SK-N-SH (cell line): ENCODE measurements at regions of chr4 and their contacts with region 1.

Region 1: DNA sequence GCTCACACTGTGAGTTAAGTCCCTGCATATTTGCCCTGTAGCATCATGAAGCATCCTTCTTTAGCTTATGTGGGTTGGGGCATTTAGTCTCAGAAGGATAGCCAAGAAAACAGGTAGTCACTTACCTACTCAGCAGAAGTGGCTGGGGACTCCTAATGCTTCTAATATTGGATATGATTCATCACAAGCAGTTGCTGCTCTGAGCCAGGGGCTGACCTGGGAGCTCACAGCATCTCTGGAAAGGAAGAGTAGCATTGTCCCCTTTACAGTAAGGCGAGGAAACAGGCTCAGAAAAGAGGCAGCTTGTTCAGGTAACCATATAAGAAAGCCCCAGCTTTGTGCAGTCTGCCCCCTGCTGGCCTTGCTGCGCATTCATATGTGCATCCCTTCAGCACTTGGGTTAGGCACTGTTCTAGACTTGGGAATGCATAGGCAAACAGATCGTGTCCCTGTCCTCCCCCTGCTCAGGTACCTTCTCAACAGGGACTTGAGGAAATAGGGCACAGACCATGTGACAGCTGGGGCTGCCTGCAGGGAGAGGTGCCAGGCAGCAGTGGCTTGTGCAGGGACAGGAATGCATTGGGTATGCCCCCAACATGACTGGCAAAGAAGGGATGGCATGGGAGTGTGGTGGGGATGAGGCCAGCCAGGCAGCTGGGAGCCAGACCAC is 35.7 kb upstream of the TBC1D14 start:
- DNase-seq: peak; percentile 63
- H3K4me3 ChIP-seq: no peak overlapping the region; a peak in 1 of 4 replicates
- H3K27ac ChIP-seq: no peak overlapping the region
- H3K4me1 ChIP-seq: no peaks in the 10 kb centered on the region
- H3K27me3 ChIP-seq: no peaks in the 10 kb centered on the region
- CTCF ChIP-seq: peak; percentile 91
- EP300 ChIP-seq: no peak
- RAD21 ChIP-seq: peak; percentile 83

Region 2: DNA sequence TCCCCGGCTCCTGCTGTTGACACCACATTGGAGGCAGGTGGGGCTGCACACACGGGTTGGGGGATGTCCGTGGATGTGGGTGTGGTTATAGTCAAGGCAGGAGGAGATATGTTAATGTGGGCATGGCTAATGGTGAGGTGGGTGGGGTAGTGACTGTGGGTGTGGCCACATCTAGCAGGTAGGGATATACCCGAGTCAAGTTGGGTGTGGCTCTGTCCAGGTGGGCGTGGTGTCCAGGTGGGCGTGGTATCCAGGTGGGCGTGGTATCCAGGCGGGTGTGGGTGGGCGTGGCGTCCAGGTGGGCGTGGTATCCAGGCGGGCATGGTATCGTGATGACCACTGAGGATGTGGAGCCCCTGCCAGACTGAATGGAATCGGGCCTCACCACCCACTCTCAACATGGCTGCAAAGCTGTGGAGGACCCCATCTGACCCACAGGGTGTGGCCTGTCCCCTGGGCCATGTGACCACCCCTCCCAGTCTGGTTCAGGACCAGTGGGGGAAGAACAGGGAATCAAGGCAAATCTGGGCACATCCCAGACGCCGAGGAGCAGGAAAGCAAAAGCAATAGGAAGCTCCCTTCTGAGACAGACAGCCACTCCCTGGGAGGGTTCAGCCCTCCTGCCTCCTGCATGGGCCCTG is 277.9 kb before region 1 on chr4:
- CTCF ChIA-PET with region 1: no interaction called
- POLR2A ChIA-PET with region 1: no interaction called
- DNase-seq: no peak
- H3K4me3 ChIP-seq: no peak overlapping the region
- H3K27ac ChIP-seq: no peak overlapping the region
- H3K4me1 ChIP-seq: no peaks in the 10 kb centered on the region
- H3K27me3 ChIP-seq: no peaks in the 10 kb centered on the region
- CTCF ChIP-seq: no peak
- EP300 ChIP-seq: no peak
- RAD21 ChIP-seq: no peak

Region 3: DNA sequence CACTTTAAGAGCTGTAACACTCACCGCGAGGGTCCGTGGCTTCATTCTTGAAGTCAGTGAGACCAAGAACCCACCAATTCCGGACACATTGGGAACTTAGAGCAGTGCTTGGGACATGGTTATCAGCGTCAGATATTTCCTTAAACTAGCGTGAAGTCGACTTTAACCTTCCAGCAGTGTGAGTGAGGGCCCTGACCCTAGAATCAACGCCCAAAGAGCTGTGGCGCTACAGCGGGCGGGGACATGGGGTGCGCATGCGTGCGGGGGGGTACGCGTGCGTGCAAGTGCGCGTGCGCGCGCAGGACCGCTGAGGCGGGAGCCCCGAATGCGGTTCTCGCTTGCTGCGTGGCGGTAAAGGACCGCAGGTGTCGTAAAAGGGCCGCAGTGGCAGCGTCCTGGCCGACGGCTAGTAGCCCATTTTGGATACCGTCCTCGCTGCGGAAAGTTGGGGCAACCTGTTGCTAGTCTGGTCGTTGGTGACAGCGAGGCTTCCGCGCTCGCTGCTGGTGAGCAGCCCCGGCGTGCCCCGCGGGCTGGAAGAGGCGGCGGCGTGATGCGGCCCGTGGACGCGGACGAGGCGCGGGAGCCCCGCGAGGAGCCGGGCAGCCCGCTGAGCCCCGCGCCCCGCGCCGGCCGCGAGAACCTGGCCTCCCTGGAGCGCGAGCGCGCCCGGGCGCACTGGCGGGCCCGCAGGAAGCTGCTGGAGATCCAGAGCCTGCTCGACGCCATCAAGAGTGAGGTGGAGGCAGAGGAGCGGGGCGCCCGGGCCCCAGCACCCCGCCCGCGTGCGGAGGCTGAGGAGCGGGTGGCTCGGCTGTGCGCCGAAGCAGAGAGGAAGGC is 200.0 kb before region 1 on chr4:
- CTCF ChIA-PET with region 1: interaction called, 13 read pairs
- POLR2A ChIA-PET with region 1: no interaction called
- DNase-seq: peak; percentile 100
- H3K4me3 ChIP-seq: peak overlapping the region; percentile 73 to 87
- H3K27ac ChIP-seq: peak overlapping the region; percentile 89 to 91
- H3K4me1 ChIP-seq: peaks cover 16 to 20% of the 10 kb centered on the region in 2 experiments; a peak in 2 of 4 replicates
- H3K27me3 ChIP-seq: no peaks in the 10 kb centered on the region
- CTCF ChIP-seq: no peak
- EP300 ChIP-seq: no peak
- RAD21 ChIP-seq: no peak

Region 4: GRCh38 chr4:6716018-6716911 is 157.7 kb before region 1 on chr4 and contains the start of gene BLOC1S4:
- CTCF ChIA-PET with region 1: interaction called, 204 read pairs
- POLR2A ChIA-PET with region 1: no interaction called
- DNase-seq: peak; percentile 97
- H3K4me3 ChIP-seq: peak within 1 kb of the TSS; percentile 81 to 83
- H3K27ac ChIP-seq: peak within 1 kb of the TSS; percentile 60 to 85
- H3K4me1 ChIP-seq: peaks cover 0 to 6% of the 10 kb centered on the region in 2 experiments; a peak in 2 of 4 replicates
- H3K27me3 ChIP-seq: no peaks in the 10 kb centered on the region
- CTCF ChIP-seq: no peak
- EP300 ChIP-seq: no peak
- RAD21 ChIP-seq: no peak
- polyA plus RNA-seq, gene BLOC1S4: 21.9 and 22.1 TPM in 2 replicates

Region 5: DNA sequence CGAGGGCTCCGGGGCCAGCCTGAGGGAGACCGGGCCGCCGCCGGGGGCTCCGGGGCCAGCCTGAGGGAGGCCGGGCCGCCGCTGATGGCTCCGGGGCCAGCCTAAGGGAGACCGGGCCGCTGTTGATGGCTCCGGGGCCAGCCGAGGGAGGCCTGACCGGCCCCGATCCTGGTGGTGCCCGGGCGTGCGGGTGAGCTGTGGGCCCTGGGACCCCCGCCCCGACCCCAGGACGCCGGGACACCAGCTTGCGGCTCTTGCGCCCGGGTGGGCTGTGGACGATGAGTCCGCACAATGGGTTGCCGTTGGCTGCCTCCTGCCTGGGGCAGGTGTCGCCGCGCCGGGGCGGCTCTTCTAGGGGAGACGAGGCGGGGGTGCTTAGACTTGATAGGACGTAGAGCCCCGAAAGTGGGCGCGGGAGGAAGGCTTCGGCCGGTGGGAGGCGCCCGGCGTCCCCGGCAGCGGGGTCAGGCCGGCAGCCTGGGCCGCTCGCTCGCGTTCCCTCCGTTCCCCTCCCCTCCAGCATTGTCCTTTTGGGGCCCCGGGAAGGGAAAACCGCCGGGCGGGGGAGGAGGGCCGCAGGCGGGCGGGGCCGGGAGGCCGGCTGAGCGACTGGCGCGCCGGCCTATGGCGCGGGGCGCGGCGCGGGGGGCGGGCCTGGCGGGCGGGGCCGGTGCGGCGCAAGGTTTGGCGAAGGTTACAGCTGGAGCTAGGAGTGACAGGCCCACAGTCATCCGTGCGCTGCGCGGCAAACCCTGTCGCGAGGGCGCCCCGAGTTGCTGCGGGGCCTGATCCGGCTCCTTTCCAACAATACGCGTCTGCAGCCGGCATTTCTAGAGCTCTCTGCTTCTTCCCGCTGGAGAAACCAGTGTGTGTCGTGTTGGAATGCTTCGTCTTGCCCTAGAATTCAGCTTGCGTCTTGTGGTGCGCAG is 90.6 kb before region 1 on chr4:
- CTCF ChIA-PET with region 1: interaction called, 24 read pairs
- POLR2A ChIA-PET with region 1: no interaction called
- DNase-seq: peak; percentile 98
- H3K4me3 ChIP-seq: peak overlapping the region; percentile 81 to 98
- H3K27ac ChIP-seq: peak overlapping the region; percentile 87 to 90
- H3K4me1 ChIP-seq: peaks cover 0 to 9% of the 10 kb centered on the region in 2 experiments; a peak in 2 of 4 replicates
- H3K27me3 ChIP-seq: no peaks in the 10 kb centered on the region
- CTCF ChIP-seq: peak; percentile 25
- EP300 ChIP-seq: no peak
- RAD21 ChIP-seq: no peak

Region 6: GRCh38 chr4:6804082-6804752 is 69.7 kb before region 1 on chr4:
- CTCF ChIA-PET with region 1: interaction called, 11 read pairs
- POLR2A ChIA-PET with region 1: no interaction called
- DNase-seq: no peak
- H3K4me3 ChIP-seq: no peak overlapping the region
- H3K27ac ChIP-seq: no peak overlapping the region
- H3K4me1 ChIP-seq: peaks cover 0 to 12% of the 10 kb centered on the region in 2 experiments; a peak in 2 of 4 replicates
- H3K27me3 ChIP-seq: no peaks in the 10 kb centered on the region
- CTCF ChIP-seq: no peak
- EP300 ChIP-seq: no peak
- RAD21 ChIP-seq: no peak

Region 7: DNA sequence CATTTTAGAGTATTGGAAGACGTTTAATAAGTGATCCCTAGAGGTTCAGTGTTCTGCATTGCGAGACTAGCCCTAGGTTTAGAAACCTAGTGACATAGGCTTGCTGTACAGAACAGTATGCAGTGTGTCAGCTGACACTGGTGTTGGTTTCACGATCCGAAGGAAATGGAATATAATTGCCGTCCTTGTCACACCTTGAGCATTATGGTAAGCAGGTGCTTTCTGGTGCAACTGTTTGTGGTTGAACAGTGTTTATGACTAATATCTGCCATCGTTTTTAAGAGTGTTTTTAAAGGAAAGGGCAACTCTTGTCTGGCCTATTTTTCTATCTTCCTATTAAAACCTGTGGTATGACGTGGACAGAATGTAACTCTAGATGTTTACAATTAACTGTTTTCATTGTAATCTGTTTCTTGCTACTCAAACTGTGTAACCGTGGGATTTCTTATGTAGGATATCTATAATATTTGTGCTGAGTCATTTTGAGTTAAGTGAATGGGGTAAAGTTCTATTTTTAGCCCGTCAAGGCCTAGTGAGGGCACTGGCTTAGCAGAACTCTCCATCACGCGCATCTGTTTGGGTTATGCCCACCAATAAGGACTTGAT is 18.1 kb before region 1 on chr4:
- CTCF ChIA-PET with region 1: interaction called, 23 read pairs
- POLR2A ChIA-PET with region 1: no interaction called
- DNase-seq: no peak
- H3K4me3 ChIP-seq: no peak overlapping the region
- H3K27ac ChIP-seq: peak overlapping the region; percentile 43 to 63; a peak in 3 of 4 replicates
- H3K4me1 ChIP-seq: peaks cover 5 to 7% of the 10 kb centered on the region in 2 experiments; a peak in 3 of 4 replicates
- H3K27me3 ChIP-seq: no peaks in the 10 kb centered on the region
- CTCF ChIP-seq: no peak
- EP300 ChIP-seq: no peak
- RAD21 ChIP-seq: no peak

Region 8: GRCh38 chr4:6885951-6886557 is 12.1 kb after region 1 on chr4:
- CTCF ChIA-PET with region 1: interaction called, 57 read pairs
- POLR2A ChIA-PET with region 1: interaction called, 4 read pairs
- DNase-seq: no peak
- H3K4me3 ChIP-seq: no peak overlapping the region
- H3K27ac ChIP-seq: no peak overlapping the region
- H3K4me1 ChIP-seq: peaks cover 0 to 3% of the 10 kb centered on the region in 2 experiments; a peak in 1 of 4 replicates
- H3K27me3 ChIP-seq: no peaks in the 10 kb centered on the region
- CTCF ChIP-seq: no peak; the same call in 1 of the 2 replicates
- EP300 ChIP-seq: no peak
- RAD21 ChIP-seq: no peak